Calu3 (cell line): ENCODE measurements at regions of chr1 and their contacts with region 1.

Region 1: GRCh38 chr1:198907423-198907746 is 268.5 kb downstream of the PTPRC start:
- DNase-seq: no peak
- H3K4me3 Mint-ChIP-seq: no peak overlapping the region
- H3K27ac Mint-ChIP-seq: peak overlapping the region; percentile 5
- H3K4me1 Mint-ChIP-seq: peaks cover 73% of the 10 kb centered on the region
- H3K27me3 Mint-ChIP-seq: no peaks in the 10 kb centered on the region
- CTCF ChIP-seq: no peak

Region 2: GRCh38 chr1:198919667-198920398 is 12.4 kb after region 1 on chr1:
- CTCF ChIA-PET with region 1: no interaction called
- intact Hi-C with region 1: loop called (anchors 2 kb)
- DNase-seq: no peak
- H3K4me3 Mint-ChIP-seq: peak overlapping the region; percentile 57
- H3K27ac Mint-ChIP-seq: peak overlapping the region; percentile 72
- H3K4me1 Mint-ChIP-seq: peaks cover 53% of the 10 kb centered on the region
- H3K27me3 Mint-ChIP-seq: no peaks in the 10 kb centered on the region
- CTCF ChIP-seq: no peak